CD8-positive, alpha-beta memory T cell (primary cell): ENCODE measurements at regions of chr11 and their contacts with region 1.

Region 1: GRCh38 chr11:102341844-102342318 is 5.1 kb upstream of the BIRC2 start:
- DNase-seq: peak; percentile 47 to 77 (median 64)
- H3K4me3 ChIP-seq: no peak overlapping the region
- H3K4me3 Mint-ChIP-seq: peak overlapping the region in 1 of 7 donors; percentile 13
- H3K27ac ChIP-seq: no peak overlapping the region
- H3K27ac Mint-ChIP-seq: peak overlapping the region; percentile 0 to 88 (median 66)
- H3K4me1 ChIP-seq: peaks cover 9% of the 10 kb centered on the region
- H3K4me1 Mint-ChIP-seq: peaks cover 16 to 31% (median 31%) of the 10 kb centered on the region in 3 donors
- H3K27me3 ChIP-seq: no peaks in the 10 kb centered on the region
- H3K27me3 Mint-ChIP-seq: peaks cover 0 to 3% of the 10 kb centered on the region in 2 donors

Region 2: DNA sequence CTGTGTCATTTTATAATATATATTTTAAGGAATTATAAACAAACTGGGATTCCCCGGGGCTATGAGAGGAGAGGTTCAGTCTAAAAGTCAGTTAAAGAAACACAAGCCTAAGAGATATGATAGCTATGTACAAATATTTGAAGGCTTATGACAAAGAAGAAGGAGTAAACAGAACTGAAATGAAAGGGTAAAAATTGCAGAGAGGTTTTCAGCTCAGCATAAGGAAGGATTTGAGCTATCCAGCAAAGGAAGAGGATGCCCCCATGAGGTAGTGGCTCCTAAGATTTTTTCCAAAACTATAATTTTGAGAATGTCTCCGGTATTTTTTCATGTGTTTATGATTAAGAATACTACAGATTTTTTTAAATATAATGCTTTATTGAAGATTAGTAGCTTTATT is 367.6 kb before region 1 on chr11:
- CTCF ChIA-PET with region 1: no interaction called
- POLR2A ChIA-PET with region 1: no interaction called
- DNase-seq: no peak
- H3K4me3 ChIP-seq: no peak overlapping the region
- H3K4me3 Mint-ChIP-seq: no peak overlapping the region
- H3K27ac ChIP-seq: no peak overlapping the region
- H3K27ac Mint-ChIP-seq: no peak overlapping the region
- H3K4me1 ChIP-seq: no peaks in the 10 kb centered on the region
- H3K4me1 Mint-ChIP-seq: no peaks in the 10 kb centered on the region
- H3K27me3 ChIP-seq: no peaks in the 10 kb centered on the region
- H3K27me3 Mint-ChIP-seq: no peaks in the 10 kb centered on the region

Region 3: GRCh38 chr11:102293873-102294601 is 47.8 kb before region 1 on chr11:
- CTCF ChIA-PET with region 1: interaction called, 84 read pairs
- POLR2A ChIA-PET with region 1: no interaction called
- DNase-seq: peak in 2 of 5 donors; percentile 58 to 64
- H3K4me3 ChIP-seq: peak overlapping the region; percentile 45
- H3K4me3 Mint-ChIP-seq: peak overlapping the region; percentile 82 to 96 (median 92)
- H3K27ac ChIP-seq: no peak overlapping the region
- H3K27ac Mint-ChIP-seq: peak overlapping the region; percentile 21 to 99 (median 96)
- H3K4me1 ChIP-seq: peaks cover 16% of the 10 kb centered on the region
- H3K4me1 Mint-ChIP-seq: peaks cover 20 to 43% (median 42%) of the 10 kb centered on the region in 3 donors
- H3K27me3 ChIP-seq: no peaks in the 10 kb centered on the region
- H3K27me3 Mint-ChIP-seq: no peaks in the 10 kb centered on the region

Region 4: GRCh38 chr11:102361086-102362031 is 19.5 kb after region 1 on chr11:
- CTCF ChIA-PET with region 1: interaction called, 16 read pairs
- POLR2A ChIA-PET with region 1: no interaction called
- DNase-seq: peak in 3 of 5 donors; percentile 53 to 84 (median 57)
- H3K4me3 ChIP-seq: peak overlapping the region; percentile 13
- H3K4me3 Mint-ChIP-seq: peak overlapping the region; percentile 39 to 76 (median 66)
- H3K27ac ChIP-seq: no peak overlapping the region
- H3K27ac Mint-ChIP-seq: peak overlapping the region; percentile 58 to 94 (median 89)
- H3K4me1 ChIP-seq: peaks cover 30% of the 10 kb centered on the region
- H3K4me1 Mint-ChIP-seq: peaks cover 40 to 58% (median 54%) of the 10 kb centered on the region in 3 donors
- H3K27me3 ChIP-seq: no peaks in the 10 kb centered on the region
- H3K27me3 Mint-ChIP-seq: peaks cover 0 to 1% of the 10 kb centered on the region in 2 donors

Region 5: DNA sequence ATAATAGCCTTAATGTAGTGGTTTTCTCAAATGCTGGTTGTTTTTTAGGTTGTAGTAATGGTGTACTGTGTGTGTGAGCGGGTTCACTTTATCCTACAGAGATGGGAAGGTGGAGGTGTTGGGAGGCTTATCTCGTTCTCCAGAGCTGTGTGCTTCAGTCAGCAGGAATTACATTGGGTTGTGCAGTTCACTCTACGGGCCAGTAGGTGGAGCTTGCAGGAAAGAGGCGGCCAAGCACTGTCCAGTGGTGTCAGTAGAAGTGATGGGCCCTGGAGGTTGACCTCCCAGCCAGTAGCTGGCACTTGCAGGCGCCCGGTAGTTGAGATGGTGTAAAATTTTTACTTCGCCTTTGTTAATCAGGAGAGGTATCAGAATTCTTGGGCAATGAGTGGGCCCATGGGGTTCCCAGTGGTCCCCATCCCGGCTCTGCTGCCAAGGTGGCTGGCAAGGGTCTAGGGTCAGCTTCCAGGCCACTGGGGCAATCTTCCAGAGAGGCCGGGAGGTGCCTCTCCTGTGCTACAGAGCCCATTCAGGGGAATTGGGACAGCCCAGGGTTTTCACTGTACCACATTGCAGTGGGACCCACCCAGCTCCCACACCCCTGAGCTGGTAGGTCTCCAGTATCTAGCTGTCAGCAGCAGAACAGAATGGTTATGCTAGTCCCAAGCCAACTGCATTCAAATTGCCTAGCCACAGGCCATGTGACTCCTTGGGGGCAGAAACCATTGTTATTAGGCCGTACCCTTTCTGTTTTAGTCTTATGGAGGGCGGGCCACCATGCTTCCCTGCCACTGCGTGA is 49.0 kb after region 1 on chr11:
- CTCF ChIA-PET with region 1: interaction called, 15 read pairs
- POLR2A ChIA-PET with region 1: no interaction called
- DNase-seq: peak; percentile 27 to 71 (median 44)
- H3K4me3 ChIP-seq: no peak overlapping the region
- H3K4me3 Mint-ChIP-seq: no peak overlapping the region
- H3K27ac ChIP-seq: no peak overlapping the region
- H3K27ac Mint-ChIP-seq: peak overlapping the region; percentile 15 to 86 (median 74)
- H3K4me1 ChIP-seq: peaks cover 20% of the 10 kb centered on the region
- H3K4me1 Mint-ChIP-seq: peaks cover 19 to 36% (median 34%) of the 10 kb centered on the region in 3 donors
- H3K27me3 ChIP-seq: no peaks in the 10 kb centered on the region
- H3K27me3 Mint-ChIP-seq: no peaks in the 10 kb centered on the region

Region 6: DNA sequence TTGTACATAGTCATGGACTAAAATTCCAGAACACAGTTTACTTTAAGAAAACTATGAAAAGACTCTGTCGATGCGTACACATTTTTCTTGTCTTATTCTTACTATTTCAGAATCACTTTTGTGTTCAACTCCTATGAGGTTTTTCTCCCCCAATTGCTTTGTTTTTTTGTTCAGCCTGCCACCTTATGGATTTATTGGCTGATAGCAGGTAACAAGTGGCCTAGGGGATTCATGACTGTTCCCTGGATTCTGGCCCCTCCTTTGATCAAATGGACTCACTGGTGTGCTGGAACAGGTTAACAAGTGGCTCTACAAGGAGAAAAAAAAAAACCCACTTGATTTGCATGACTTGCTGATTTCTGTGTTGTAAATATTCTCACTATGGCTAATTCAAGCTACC is 272.6 kb after region 1 on chr11:
- CTCF ChIA-PET with region 1: interaction called, 18 read pairs
- POLR2A ChIA-PET with region 1: no interaction called
- DNase-seq: no peak
- H3K4me3 ChIP-seq: no peak overlapping the region
- H3K4me3 Mint-ChIP-seq: no peak overlapping the region
- H3K27ac ChIP-seq: no peak overlapping the region
- H3K27ac Mint-ChIP-seq: no peak overlapping the region
- H3K4me1 ChIP-seq: no peaks in the 10 kb centered on the region
- H3K4me1 Mint-ChIP-seq: peaks cover 0 to 3% (median 0%) of the 10 kb centered on the region in 3 donors
- H3K27me3 ChIP-seq: no peaks in the 10 kb centered on the region
- H3K27me3 Mint-ChIP-seq: no peaks in the 10 kb centered on the region